Mammary epithelial cell (primary cell): ENCODE measurements at regions of chr22 and their contacts with region 1.

Region 1: GRCh38 chr22:44869196-44869595 is 116.8 kb downstream of the ARHGAP8 start:
- DNase-seq: no peak
- H3K4me3 ChIP-seq: no peak overlapping the region
- H3K27ac ChIP-seq: no peak overlapping the region
- H3K4me1 ChIP-seq: peaks cover 10% of the 10 kb centered on the region
- H3K27me3 ChIP-seq: no peaks in the 10 kb centered on the region
- CTCF ChIP-seq: no peak

Region 2: GRCh38 chr22:44918166-44918924 is 49.1 kb after region 1 on chr22:
- CTCF ChIA-PET with region 1: no interaction called
- dilution Hi-C with region 1: loop called (anchors 5 kb)
- in situ Hi-C with region 1: no loop called
- intact Hi-C with region 1: no loop called
- DNase-seq: no peak
- H3K4me3 ChIP-seq: no peak overlapping the region
- H3K27ac ChIP-seq: no peak overlapping the region
- H3K4me1 ChIP-seq: peaks cover 5% of the 10 kb centered on the region
- H3K27me3 ChIP-seq: peaks cover 4% of the 10 kb centered on the region
- CTCF ChIP-seq: no peak